CD4-positive, alpha-beta memory T cell (primary cell): ENCODE measurements at regions of chr15 and their contacts with region 1.

Region 1: GRCh38 chr15:65856821-65857455 is 12.4 kb upstream of the RAB11A start:
- DNase-seq: peak; percentile 76 to 84 (median 77)
- H3K4me3 ChIP-seq: no peak overlapping the region
- H3K4me3 Mint-ChIP-seq: peak overlapping the region in 1 of 8 donors; percentile 32
- H3K27ac ChIP-seq: no peak overlapping the region
- H3K27ac Mint-ChIP-seq: peak overlapping the region in 4 of 7 donors; percentile 10 to 88 (median 49)
- H3K4me1 ChIP-seq: no peaks in the 10 kb centered on the region
- H3K4me1 Mint-ChIP-seq: peaks cover 9 to 13% (median 10%) of the 10 kb centered on the region in 4 donors
- H3K27me3 ChIP-seq: no peaks in the 10 kb centered on the region
- H3K27me3 Mint-ChIP-seq: no peaks in the 10 kb centered on the region

Region 2: DNA sequence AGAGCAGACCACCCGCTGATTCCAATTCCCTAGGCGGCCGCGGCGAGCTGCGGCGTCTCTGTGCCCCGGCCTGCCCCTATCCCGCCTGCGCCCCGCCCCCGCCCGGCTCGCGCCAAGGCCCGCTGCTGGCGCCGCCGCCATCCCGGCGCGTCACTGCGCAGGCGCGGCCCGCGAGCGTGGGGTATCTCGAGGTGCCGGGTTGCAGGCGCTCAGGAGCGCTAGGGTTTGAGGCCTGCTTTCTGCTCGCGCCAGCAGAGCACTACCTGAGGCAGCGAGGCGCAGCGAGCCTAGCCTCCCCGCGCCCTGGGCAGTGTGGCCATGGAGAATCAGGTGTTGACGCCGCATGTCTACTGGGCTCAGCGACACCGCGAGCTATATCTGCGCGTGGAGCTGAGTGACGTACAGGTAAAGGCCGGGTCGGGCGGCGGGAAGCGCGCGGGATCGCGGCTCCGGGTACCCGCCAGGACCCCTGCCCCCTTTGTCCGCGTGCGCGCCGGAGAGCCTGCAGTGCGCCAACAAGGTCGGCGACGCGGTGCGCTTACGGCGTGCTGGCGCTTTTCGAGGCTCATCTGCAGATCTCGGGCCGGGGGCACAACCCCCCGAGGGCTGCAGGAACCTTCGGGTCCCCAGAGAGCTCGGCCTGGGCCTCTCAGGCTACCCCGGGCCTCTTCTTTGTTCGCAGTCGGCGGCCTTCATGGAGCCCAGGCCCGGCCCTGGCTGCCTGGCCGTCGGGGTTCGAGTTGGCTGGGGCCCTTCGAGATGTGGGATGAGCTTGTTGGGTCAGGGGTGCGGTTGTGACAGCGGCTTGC is 326.4 kb before region 1 on chr15 and contains the start of gene HACD3:
- CTCF ChIA-PET with region 1: no interaction called
- POLR2A ChIA-PET with region 1: no interaction called
- intact Hi-C with region 1: no loop called
- DNase-seq: peak; percentile 83 to 90 (median 87)
- H3K4me3 ChIP-seq: peak within 1 kb of the TSS; percentile 52 to 93
- H3K4me3 Mint-ChIP-seq: peak within 1 kb of the TSS; percentile 83 to 90 (median 88)
- H3K27ac ChIP-seq: peak within 1 kb of the TSS; percentile 67
- H3K27ac Mint-ChIP-seq: peak within 1 kb of the TSS; percentile 55 to 95 (median 87)
- H3K4me1 ChIP-seq: peaks cover 24% of the 10 kb centered on the region
- H3K4me1 Mint-ChIP-seq: peaks cover 24 to 33% (median 30%) of the 10 kb centered on the region in 4 donors
- H3K27me3 ChIP-seq: no peaks in the 10 kb centered on the region
- H3K27me3 Mint-ChIP-seq: no peaks in the 10 kb centered on the region
- total RNA-seq, gene HACD3: 23.1 to 23.8 TPM

Region 3: DNA sequence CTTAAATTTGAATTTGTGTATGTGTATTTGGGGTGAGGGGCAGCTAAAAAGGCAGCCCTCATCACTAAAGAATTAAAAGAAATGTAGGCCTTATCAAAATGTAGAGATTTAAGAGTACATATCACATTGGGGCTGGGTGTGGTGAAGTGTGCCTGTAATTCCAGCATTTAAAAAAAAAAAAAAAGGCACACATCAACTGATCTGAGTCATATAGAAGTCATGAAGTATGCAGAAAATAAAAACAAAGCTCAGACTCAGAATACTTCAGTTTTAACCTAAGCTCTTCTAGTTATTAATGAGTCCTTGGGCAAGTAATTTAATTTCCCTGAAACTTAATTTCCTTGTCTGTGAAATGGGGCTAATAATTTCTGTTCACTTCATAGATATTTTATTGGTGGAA is 203.6 kb before region 1 on chr15:
- CTCF ChIA-PET with region 1: interaction called, 10 read pairs
- POLR2A ChIA-PET with region 1: no interaction called
- intact Hi-C with region 1: no loop called
- DNase-seq: no peak
- H3K4me3 ChIP-seq: no peak overlapping the region
- H3K4me3 Mint-ChIP-seq: no peak overlapping the region
- H3K27ac ChIP-seq: no peak overlapping the region
- H3K27ac Mint-ChIP-seq: peak overlapping the region in 2 of 7 donors; percentile 41 to 80
- H3K4me1 ChIP-seq: no peaks in the 10 kb centered on the region
- H3K4me1 Mint-ChIP-seq: peaks cover 4 to 14% (median 10%) of the 10 kb centered on the region in 4 donors
- H3K27me3 ChIP-seq: no peaks in the 10 kb centered on the region
- H3K27me3 Mint-ChIP-seq: no peaks in the 10 kb centered on the region

Region 4: GRCh38 chr15:65772930-65773329 is 84.0 kb before region 1 on chr15:
- CTCF ChIA-PET with region 1: no interaction called
- POLR2A ChIA-PET with region 1: no interaction called
- intact Hi-C with region 1: no loop called
- DNase-seq: peak in 1 of 5 donors; percentile 36
- H3K4me3 ChIP-seq: no peak overlapping the region
- H3K4me3 Mint-ChIP-seq: peak overlapping the region in 4 of 8 donors; percentile 48 to 74 (median 70)
- H3K27ac ChIP-seq: no peak overlapping the region
- H3K27ac Mint-ChIP-seq: peak overlapping the region in 5 of 7 donors; percentile 17 to 48 (median 43)
- H3K4me1 ChIP-seq: peaks cover 37% of the 10 kb centered on the region
- H3K4me1 Mint-ChIP-seq: peaks cover 41 to 67% (median 47%) of the 10 kb centered on the region in 4 donors
- H3K27me3 ChIP-seq: no peaks in the 10 kb centered on the region
- H3K27me3 Mint-ChIP-seq: no peaks in the 10 kb centered on the region

Region 5: DNA sequence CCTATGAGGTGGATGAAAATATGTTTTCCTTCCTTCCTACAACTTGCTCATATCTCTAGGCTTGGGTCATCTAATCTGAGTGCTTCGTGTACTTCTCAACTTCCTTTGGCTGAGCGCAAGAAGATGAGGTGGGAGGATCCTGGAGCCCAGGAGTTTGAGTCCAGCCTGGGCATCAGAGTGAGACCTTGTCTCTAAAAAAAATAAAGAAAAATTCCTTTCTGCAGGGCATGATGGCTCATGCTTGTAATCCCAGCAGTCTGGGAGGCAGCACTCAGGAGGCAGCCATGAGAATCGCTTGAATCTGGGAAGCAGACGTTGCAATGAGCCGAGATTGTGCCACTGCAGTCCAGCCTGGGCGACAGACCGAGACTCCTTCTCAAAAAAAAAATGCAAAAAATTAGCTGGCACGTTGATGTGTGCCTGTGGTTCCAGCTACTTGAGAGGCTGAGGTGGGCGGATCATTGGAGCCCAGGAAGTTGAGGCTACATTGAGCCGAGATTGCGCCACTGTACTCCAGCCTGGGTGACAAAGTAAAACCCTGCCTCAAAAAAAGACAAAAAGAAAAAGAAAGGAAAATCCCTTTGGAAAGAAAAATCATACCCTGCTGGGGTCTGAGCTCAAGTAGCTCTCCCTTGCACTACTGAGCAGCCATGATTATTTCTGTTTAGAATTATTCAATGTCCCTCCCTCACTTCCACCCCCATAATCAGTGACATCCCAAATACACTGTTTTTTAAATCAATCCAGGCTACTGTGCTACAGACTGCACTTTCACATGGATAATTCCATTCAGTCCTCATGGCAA is 15.6 kb before region 1 on chr15:
- CTCF ChIA-PET with region 1: interaction called, 35 read pairs
- POLR2A ChIA-PET with region 1: no interaction called
- intact Hi-C with region 1: no loop called
- DNase-seq: no peak
- H3K4me3 ChIP-seq: no peak overlapping the region
- H3K4me3 Mint-ChIP-seq: no peak overlapping the region
- H3K27ac ChIP-seq: no peak overlapping the region
- H3K27ac Mint-ChIP-seq: peak overlapping the region in 3 of 7 donors; percentile 30 to 64 (median 59)
- H3K4me1 ChIP-seq: peaks cover 2% of the 10 kb centered on the region
- H3K4me1 Mint-ChIP-seq: peaks cover 0 to 5% (median 4%) of the 10 kb centered on the region in 4 donors
- H3K27me3 ChIP-seq: no peaks in the 10 kb centered on the region
- H3K27me3 Mint-ChIP-seq: no peaks in the 10 kb centered on the region

Region 6: DNA sequence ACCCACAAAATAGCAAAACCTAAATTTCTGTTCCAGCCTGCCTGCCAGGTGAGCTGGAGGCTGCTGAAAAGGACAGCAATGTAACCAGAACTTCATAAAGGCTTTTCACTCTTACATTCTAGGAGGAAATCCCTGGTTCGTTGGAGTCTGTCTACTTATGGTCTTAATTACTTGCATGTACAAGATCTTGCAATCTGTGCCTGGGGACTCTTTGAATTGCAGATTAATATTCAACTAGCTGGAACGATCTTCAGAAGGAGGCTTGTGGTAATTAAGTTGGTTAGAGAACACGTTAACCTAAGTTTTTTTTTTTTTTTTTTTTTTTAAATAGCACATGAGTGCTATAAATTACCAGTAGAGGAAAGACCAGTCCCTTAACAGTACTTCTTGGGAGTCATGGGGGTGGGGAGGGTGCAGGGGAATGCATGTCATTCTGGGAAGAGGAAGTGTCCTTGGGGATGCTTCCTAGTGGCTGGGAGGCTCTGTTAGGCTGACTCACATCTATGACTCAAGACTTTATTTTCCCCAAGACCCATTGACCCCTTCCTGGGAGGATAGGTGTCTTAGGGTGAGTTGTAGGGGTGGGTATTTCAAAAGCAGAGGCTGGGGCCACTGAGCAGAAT is 152.1 kb after region 1 on chr15:
- CTCF ChIA-PET with region 1: no interaction called
- POLR2A ChIA-PET with region 1: no interaction called
- intact Hi-C with region 1: no loop called
- DNase-seq: no peak
- H3K4me3 ChIP-seq: no peak overlapping the region
- H3K4me3 Mint-ChIP-seq: no peak overlapping the region
- H3K27ac ChIP-seq: no peak overlapping the region
- H3K27ac Mint-ChIP-seq: no peak overlapping the region
- H3K4me1 ChIP-seq: no peaks in the 10 kb centered on the region
- H3K4me1 Mint-ChIP-seq: no peaks in the 10 kb centered on the region
- H3K27me3 ChIP-seq: peaks cover 4% of the 10 kb centered on the region
- H3K27me3 Mint-ChIP-seq: peaks cover 1 to 2% of the 10 kb centered on the region in 2 donors

Region 7: DNA sequence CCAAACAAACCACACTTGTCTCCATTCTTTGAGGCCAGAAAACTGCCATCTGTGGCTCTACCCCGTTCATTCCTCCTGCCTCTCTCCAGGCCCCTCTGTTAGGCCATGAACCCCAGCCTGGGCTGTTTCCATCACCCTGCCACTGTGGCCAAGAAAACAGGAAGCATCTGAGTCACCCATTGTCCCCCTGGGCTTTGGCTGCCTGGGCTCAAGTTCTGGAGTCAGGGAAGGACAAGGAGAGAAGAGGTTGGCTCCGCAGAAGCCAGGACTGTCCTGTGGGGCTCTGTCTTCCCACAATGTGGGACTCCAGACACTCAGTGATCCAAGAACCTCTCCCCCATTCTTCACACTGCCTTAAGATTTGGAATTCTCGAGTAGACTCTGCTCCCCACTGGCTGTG is 723.7 kb after region 1 on chr15:
- CTCF ChIA-PET with region 1: no interaction called
- POLR2A ChIA-PET with region 1: no interaction called
- intact Hi-C with region 1: no loop called
- DNase-seq: no peak
- H3K4me3 ChIP-seq: no peak overlapping the region
- H3K4me3 Mint-ChIP-seq: no peak overlapping the region
- H3K27ac ChIP-seq: no peak overlapping the region
- H3K27ac Mint-ChIP-seq: no peak overlapping the region
- H3K4me1 ChIP-seq: no peaks in the 10 kb centered on the region
- H3K4me1 Mint-ChIP-seq: no peaks in the 10 kb centered on the region
- H3K27me3 ChIP-seq: no peaks in the 10 kb centered on the region
- H3K27me3 Mint-ChIP-seq: peaks cover 1 to 3% of the 10 kb centered on the region in 2 donors